Caco-2 (cell line): ENCODE measurements at regions of chr10 and their contacts with region 1.

Region 1: GRCh38 chr10:86644152-86644793 is 10.1 kb upstream of the OPN4 start:
- DNase-seq: peak in 1 of 2 experiments; percentile 32
- H3K4me3 ChIP-seq: no peak overlapping the region
- H3K4me3 Mint-ChIP-seq: no peak overlapping the region
- H3K27ac Mint-ChIP-seq: no peak overlapping the region
- H3K4me1 ChIP-seq: no peaks in the 10 kb centered on the region
- H3K4me1 Mint-ChIP-seq: no peaks in the 10 kb centered on the region
- H3K27me3 ChIP-seq: no peaks in the 10 kb centered on the region
- H3K27me3 Mint-ChIP-seq: peaks cover 2% of the 10 kb centered on the region
- CTCF ChIP-seq: peak; percentile 44 to 78

Region 2: GRCh38 chr10:86592413-86592812 is 51.9 kb before region 1 on chr10:
- CTCF ChIA-PET with region 1: no interaction called
- POLR2A ChIA-PET with region 1: no interaction called
- intact Hi-C with region 1: loop called (anchors 1 kb)
- DNase-seq: peak; percentile 65 to 68
- H3K4me3 ChIP-seq: no peak overlapping the region
- H3K4me3 Mint-ChIP-seq: no peak overlapping the region
- H3K27ac Mint-ChIP-seq: no peak overlapping the region
- H3K4me1 ChIP-seq: peaks cover 9% of the 10 kb centered on the region; the same call in 1 of the 2 replicates
- H3K4me1 Mint-ChIP-seq: peaks cover 7% of the 10 kb centered on the region
- H3K27me3 ChIP-seq: no peaks in the 10 kb centered on the region
- H3K27me3 Mint-ChIP-seq: no peaks in the 10 kb centered on the region
- CTCF ChIP-seq: peak; percentile 58 to 81